PC-9 (cell line): ENCODE measurements at regions of chr7 and their contacts with region 1.

Region 1: GRCh38 chr7:44618743-44619142 is 12.3 kb downstream of the OGDH start:
- DNase-seq: peak; percentile 93 to 99
- H3K4me3 ChIP-seq: peak overlapping the region; percentile 52; the same call in 1 of the 2 replicates
- H3K27ac ChIP-seq: peak overlapping the region; percentile 87
- H3K4me1 ChIP-seq: peaks cover 86% of the 10 kb centered on the region
- H3K27me3 ChIP-seq: no peaks in the 10 kb centered on the region
- CTCF ChIP-seq: no peak

Region 2: DNA sequence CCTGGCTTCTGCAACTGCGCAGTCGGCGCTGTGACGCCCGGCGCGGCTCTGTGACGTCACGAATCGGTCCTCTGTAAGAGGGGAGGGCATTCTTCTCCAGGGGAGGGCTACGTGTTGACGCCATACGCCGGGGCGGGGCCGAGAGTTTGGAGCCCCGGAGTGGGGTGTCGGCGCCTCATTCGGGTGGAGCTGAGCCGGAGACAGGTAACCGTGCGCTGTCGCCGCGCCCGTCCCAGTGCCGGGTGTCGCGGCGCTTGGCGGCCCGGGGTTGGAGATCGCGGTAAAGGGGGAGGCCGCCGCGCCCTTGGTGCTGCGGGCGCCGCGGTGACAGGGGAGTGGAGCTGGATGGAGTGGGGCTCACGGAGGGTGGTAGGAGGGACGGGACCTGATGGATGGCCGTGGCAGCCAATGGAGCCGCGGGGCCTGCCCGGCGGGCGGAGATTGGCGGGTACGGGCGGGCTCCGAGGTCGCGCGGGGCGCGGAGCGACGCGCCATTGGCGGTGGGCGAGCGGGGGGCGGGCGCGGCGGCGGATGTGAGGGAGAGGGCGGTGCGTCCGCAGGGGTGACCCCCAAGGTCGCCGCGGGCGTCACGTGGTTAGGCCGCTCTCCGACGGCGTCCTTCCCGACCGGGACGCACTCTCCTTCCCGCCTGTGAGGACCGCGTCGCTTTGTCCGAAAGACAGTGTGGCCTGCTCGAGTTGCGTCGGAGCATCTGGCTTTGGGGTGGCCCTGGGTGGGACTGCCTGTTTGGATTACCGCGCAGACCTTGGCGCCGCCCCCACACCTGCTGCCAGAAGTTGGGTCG is 12.1 kb before region 1 on chr7 and contains the start of gene OGDH:
- CTCF ChIA-PET with region 1: interaction called, 4 read pairs
- POLR2A ChIA-PET with region 1: interaction called, 10 read pairs
- intact Hi-C with region 1: loop called (anchors 1 kb)
- DNase-seq: peak; percentile 98 to 100
- H3K4me3 ChIP-seq: peak within 1 kb of the TSS; percentile 81
- H3K27ac ChIP-seq: peak within 1 kb of the TSS; percentile 73
- H3K4me1 ChIP-seq: peaks cover 60% of the 10 kb centered on the region
- H3K27me3 ChIP-seq: no peaks in the 10 kb centered on the region
- CTCF ChIP-seq: no peak
- total RNA-seq, gene OGDH: 93.6 and 135 TPM in 2 replicates